ENCODE measurements at regions of chr2 and their contacts with region 1.

Region 1: GRCh38 chr2:162297925-162298552 is 20.4 kb downstream of the IFIH1 start:
- DNase-seq: peak; percentile 30 to 37
- H3K4me3 ChIP-seq: no peak overlapping the region
- H3K27ac ChIP-seq: no peak overlapping the region
- H3K4me1 ChIP-seq: no peaks in the 10 kb centered on the region
- H3K27me3 ChIP-seq: no peaks in the 10 kb centered on the region
- CTCF ChIP-seq: peak; percentile 80

Region 2: DNA sequence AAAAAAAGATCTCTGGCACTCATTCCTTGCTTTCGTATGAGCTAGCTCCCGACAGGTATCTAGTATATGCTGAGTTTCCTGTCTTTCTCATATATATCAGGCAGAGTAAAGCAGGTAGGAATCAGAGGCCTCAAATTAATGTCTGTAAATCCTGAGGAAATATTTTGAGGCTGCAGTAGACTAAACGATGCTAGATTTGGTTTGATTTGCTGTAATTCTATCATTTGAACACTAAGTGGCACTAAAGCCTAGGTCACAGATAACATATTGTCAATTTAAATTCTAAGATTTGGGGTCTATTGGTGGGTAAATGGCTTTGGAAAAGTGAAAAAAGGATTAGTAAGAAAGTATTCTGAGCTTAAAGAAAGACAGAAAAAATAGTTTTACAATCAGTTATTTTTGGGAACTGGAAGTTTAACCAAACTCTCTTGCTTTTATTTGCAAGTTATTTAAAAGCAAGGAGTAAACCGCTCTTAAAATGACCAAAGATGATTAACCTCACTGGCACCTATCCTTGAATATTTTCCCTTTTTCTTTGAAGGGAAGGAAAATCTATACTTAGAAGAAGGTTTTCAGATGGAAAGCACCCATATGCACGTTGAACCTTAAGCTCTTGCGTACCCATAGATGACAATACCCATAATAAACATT is 711.4 kb before region 1 on chr2:
- CTCF ChIA-PET with region 1: no interaction called
- POLR2A ChIA-PET with region 1: no interaction called
- intact Hi-C with region 1: loop called (anchors 2 kb)
- DNase-seq: no peak
- H3K4me3 ChIP-seq: no peak overlapping the region
- H3K27ac ChIP-seq: no peak overlapping the region
- H3K4me1 ChIP-seq: no peaks in the 10 kb centered on the region
- H3K27me3 ChIP-seq: no peaks in the 10 kb centered on the region
- CTCF ChIP-seq: peak; percentile 78

Region 3: DNA sequence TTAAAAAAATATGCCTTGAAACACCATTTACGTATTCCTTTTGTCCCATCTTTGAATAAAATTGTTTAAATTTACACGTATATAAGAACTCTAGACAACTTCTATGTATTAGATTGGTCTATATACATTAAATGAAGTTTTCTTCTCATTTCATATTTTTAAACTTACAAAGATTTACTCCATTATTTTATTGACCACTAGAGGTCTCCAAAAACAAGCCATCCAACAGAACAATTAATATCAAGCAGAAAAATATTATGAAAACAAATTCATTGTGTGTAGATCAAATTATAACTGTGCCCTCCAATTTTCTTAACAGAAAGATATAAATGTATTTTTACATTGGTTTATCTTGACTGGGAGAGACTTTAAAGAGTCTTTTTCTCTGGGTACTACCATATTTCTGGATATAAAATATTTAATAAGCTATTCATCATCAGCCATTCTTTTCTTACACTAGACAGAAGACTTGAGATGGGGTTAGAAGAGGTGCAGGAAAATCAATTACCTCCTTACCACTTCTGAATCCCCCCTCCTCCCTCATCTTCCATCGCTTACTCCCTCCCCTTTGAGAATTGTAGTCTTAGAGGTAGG is 290.5 kb before region 1 on chr2:
- CTCF ChIA-PET with region 1: no interaction called
- POLR2A ChIA-PET with region 1: no interaction called
- intact Hi-C with region 1: loop called (anchors 2 kb)
- DNase-seq: no peak
- H3K4me3 ChIP-seq: no peak overlapping the region
- H3K27ac ChIP-seq: no peak overlapping the region
- H3K4me1 ChIP-seq: no peaks in the 10 kb centered on the region
- H3K27me3 ChIP-seq: no peaks in the 10 kb centered on the region
- CTCF ChIP-seq: peak; percentile 68

Region 4: DNA sequence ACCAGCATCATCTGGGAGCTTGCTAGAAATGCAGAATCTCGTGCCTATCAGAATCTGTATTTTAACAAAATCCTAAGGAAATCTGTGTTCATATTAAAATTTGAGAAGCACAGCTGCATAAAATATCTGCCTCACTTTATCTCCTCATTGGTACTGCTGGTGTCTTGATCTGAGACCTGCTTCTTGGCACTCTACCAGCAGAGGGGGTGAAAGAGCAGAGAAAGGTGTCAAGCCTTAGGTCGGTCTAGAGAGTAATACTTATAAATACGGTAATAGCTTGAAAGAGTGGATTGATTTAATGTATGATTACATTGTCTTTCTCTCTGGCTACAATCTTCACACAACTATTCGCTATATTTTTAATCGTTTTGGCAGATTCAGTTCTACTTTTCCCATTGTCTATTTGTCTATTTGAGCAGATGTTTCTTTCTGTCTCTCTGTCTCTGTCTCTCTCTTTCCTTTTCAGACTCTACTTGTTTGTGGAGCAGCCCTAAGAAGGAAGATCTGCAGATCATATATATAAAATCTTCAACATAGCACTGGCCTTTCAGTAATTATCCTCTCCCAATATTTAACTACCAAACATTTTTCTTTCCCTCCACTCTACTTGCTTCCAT is 144.3 kb before region 1 on chr2:
- CTCF ChIA-PET with region 1: interaction called, 8 read pairs
- POLR2A ChIA-PET with region 1: interaction called, 5 read pairs
- intact Hi-C with region 1: loop called (anchors 1 kb)
- DNase-seq: peak in 1 of 2 experiments; percentile 40
- H3K4me3 ChIP-seq: no peak overlapping the region
- H3K27ac ChIP-seq: no peak overlapping the region
- H3K4me1 ChIP-seq: no peaks in the 10 kb centered on the region
- H3K27me3 ChIP-seq: no peaks in the 10 kb centered on the region
- CTCF ChIP-seq: peak; percentile 73

Region 5: DNA sequence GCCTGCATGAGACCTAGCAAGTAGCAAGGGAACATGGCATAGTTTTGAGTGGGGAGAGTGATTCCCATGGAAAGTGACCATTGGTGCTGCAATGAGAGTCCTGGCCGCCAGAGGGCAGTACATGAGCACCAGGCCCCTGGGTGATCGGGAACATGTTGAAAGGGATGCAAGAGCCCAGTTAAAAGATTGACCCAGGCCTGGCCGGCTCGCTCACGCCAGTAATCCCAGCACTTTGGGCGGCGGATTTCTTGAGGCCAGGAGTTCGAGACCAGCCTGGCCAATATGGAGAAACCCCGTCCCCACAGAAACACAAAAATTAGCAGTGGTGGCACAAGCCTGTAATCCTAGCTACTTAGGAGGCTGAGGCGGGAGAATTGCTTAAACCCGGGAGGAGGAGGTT is 77.0 kb before region 1 on chr2:
- CTCF ChIA-PET with region 1: interaction called, 26 read pairs
- POLR2A ChIA-PET with region 1: no interaction called
- intact Hi-C with region 1: loop called (anchors 1 kb)
- DNase-seq: peak in 1 of 2 experiments; percentile 41
- H3K4me3 ChIP-seq: no peak overlapping the region
- H3K27ac ChIP-seq: no peak overlapping the region
- H3K4me1 ChIP-seq: no peaks in the 10 kb centered on the region
- H3K27me3 ChIP-seq: no peaks in the 10 kb centered on the region
- CTCF ChIP-seq: peak; percentile 66